Activated B cell treated with CpG ODN at 0.5 μM for 24 hours (primary cell): ENCODE measurements at regions of chr7 and their contacts with region 1.

Region 1: DNA sequence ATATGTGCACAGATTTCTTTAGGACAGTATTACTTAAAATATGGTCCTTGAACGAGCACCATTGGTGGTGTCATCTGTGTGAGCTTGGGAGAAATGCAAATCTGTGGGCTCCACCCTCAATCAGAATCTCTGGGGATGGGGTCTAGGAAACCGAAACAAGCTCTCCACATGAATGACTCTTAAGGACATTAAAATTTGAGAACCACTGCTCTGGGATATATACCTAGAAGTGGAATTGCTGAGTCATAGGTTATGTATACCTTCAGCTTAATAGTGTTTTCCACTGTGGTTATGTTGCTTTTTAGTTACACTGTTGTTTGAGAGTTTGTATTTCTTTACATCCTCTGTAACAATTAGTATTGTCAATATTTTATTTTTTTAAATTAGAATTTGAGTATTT is 24.0 kb downstream of the ZNRF2 start:
- DNase-seq: no peak
- ATAC-seq: peak; percentile 65
- H3K4me3 Mint-ChIP-seq: no peak overlapping the region
- H3K27ac Mint-ChIP-seq: no peak overlapping the region
- H3K4me1 Mint-ChIP-seq: peaks cover 80% of the 10 kb centered on the region
- H3K27me3 Mint-ChIP-seq: no peaks in the 10 kb centered on the region
- CTCF ChIP-seq: no peak

Region 2: GRCh38 chr7:30134611-30135545 is 173.5 kb before region 1 on chr7 and contains the start of gene MTURN:
- CTCF ChIA-PET with region 1: no interaction called
- POLR2A ChIA-PET with region 1: no interaction called
- intact Hi-C with region 1: no loop called
- DNase-seq: peak; percentile 85
- ATAC-seq: peak; percentile 82
- H3K4me3 Mint-ChIP-seq: peak within 1 kb of the TSS; percentile 91
- H3K27ac Mint-ChIP-seq: peak within 1 kb of the TSS; percentile 77
- H3K4me1 Mint-ChIP-seq: peaks cover 12% of the 10 kb centered on the region
- H3K27me3 Mint-ChIP-seq: peaks cover 11% of the 10 kb centered on the region
- CTCF ChIP-seq: no peak
- total RNA-seq, gene MTURN: 2.8 and 4.6 TPM in 2 replicates

Region 3: DNA sequence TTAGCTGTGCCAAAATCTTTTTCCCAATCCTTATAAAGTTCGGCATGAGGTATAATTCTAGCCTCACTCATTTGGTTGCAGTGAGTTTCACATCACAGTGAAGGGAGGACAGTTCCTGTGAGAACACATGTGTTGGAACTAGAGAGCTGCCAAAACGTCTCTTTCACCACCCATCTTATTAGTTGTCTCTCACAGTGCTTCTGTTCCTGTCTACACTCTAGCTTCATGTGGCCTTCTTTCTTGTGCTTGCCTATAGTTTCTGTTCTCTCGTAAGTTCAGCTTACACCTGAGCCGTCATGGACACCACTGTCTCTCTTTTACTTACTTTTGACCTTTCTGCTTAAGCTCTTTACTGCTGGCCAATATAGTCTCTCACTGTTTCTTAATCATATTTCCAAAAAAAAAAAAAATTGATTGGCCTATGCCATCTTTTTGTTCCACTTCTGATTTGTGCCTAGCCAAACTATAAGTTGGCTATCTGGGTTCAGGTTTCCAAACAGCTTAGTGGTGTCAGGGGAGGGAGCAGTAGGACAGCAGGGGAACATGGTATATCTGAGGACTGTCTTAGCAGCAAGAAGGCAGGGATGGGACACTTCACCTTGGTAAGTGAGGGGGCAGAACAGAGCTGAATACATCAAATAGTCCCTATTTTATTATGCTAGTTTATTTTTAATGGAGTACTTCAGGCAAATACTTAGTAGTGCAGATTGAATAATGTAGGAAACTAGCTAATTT is 14.0 kb after region 1 on chr7:
- CTCF ChIA-PET with region 1: interaction called, 11 read pairs
- POLR2A ChIA-PET with region 1: interaction called, 11 read pairs
- intact Hi-C with region 1: loop called (anchors 1 kb)
- DNase-seq: no peak
- ATAC-seq: peak; percentile 78
- H3K4me3 Mint-ChIP-seq: peak overlapping the region; percentile 78
- H3K27ac Mint-ChIP-seq: peak overlapping the region; percentile 97
- H3K4me1 Mint-ChIP-seq: peaks cover 83% of the 10 kb centered on the region
- H3K27me3 Mint-ChIP-seq: no peaks in the 10 kb centered on the region
- CTCF ChIP-seq: no peak